ENCODE measurements at regions of chr3 and their contacts with region 1.

Region 1: DNA sequence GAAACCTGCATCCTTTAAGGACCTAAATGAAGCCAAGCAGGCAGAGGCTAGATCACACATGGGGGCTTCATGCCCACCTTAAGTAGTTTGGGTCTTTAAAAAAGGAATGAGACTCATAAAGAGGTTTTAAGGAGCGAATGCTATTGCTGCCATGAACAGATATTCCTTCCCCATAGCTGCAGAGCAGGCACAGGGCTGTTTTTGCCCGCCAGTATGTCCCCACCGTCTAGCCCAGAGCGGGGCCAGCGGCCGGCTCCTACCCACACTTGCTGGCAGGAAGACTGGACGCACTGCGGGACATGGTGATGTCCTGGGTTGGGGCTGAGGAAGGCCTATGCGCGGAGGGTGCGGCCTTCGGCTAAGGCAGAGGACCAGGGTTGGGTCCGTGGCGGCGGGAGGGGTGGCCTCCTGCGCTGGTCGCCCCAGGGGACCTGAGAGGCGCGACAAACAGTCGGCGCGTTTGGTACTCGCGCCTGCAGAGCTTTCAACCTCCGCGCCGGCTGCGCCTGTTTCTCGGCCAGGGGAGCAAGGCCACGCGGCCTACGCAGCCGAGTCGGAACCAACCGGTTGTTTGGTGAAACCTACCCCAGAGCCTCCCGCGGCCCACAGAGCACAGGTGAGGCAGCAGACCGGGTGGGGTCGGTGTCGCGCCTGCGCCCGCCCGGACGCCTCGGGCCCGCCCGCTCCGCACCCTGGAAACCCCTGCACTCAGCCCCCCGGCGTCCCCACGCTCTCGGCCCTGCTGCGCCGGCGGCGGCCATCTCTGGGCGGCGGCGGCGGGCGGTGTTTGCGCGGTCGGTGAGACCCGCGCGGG is at the start of gene FAIM:
- DNase-seq: peak; percentile 71 to 84 (median 78)
- H3K4me3 ChIP-seq: peak within 1 kb of the TSS; percentile 45 to 48
- H3K4me3 Mint-ChIP-seq: peak within 1 kb of the TSS; percentile 87 to 99 (median 88)
- H3K27ac ChIP-seq: peak within 1 kb of the TSS; percentile 67
- H3K27ac Mint-ChIP-seq: peak within 1 kb of the TSS; percentile 93 to 100 (median 96)
- H3K4me1 ChIP-seq: peaks cover 13% of the 10 kb centered on the region
- H3K4me1 Mint-ChIP-seq: peaks cover 9 to 23% (median 16%) of the 10 kb centered on the region in 4 donors
- H3K27me3 ChIP-seq: no peaks in the 10 kb centered on the region
- H3K27me3 Mint-ChIP-seq: peaks cover 0 to 5% of the 10 kb centered on the region in 2 donors
- total RNA-seq, gene FAIM: 4.6 to 5.0 TPM

Region 2: GRCh38 chr3:138547342-138547975 is 61.1 kb before region 1 on chr3:
- CTCF ChIA-PET with region 1: no interaction called
- POLR2A ChIA-PET with region 1: no interaction called
- intact Hi-C with region 1: no loop called
- DNase-seq: no peak
- H3K4me3 ChIP-seq: no peak overlapping the region
- H3K4me3 Mint-ChIP-seq: no peak overlapping the region
- H3K27ac ChIP-seq: no peak overlapping the region
- H3K27ac Mint-ChIP-seq: no peak overlapping the region
- H3K4me1 ChIP-seq: no peaks in the 10 kb centered on the region
- H3K4me1 Mint-ChIP-seq: no peaks in the 10 kb centered on the region
- H3K27me3 ChIP-seq: no peaks in the 10 kb centered on the region
- H3K27me3 Mint-ChIP-seq: no peaks in the 10 kb centered on the region

Region 3: DNA sequence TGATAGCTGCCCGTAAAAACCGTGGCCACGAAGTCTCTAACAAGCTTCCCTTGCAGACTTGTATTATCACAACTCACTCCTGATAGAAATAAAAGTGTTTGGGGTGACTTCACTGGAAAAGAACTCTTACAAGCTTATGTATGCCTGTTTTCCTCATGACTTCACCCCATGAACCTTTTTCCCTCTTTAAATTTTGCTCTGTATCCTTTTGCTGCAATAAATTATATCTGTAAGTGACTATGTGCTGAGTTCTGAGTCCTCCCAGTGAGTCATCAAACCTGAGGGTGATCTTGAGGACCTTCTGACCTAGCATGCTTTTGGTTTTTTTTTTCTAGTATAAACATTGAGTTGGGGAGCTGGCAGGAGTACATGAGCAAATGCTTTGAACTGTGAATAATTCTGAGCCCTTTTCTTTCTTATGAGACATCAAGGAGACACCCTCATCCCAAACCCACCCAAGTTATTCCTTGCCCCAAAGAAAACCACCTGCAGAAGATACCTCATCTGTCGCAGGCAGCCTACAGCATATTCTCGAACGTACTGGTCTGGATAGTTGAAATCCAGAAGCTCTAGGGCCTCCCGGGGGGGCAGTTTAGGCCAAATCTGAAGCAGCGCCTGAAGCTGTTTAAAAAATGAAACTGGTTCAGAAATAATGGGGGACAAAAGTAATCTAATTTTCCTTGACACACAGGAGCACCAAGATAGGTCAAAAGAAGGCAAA is 85.9 kb after region 1 on chr3:
- CTCF ChIA-PET with region 1: no interaction called
- POLR2A ChIA-PET with region 1: no interaction called
- intact Hi-C with region 1: loop called (anchors 5 kb)
- DNase-seq: no peak
- H3K4me3 ChIP-seq: no peak overlapping the region
- H3K4me3 Mint-ChIP-seq: no peak overlapping the region
- H3K27ac ChIP-seq: no peak overlapping the region
- H3K27ac Mint-ChIP-seq: peak overlapping the region in 1 of 7 donors; percentile 41
- H3K4me1 ChIP-seq: no peaks in the 10 kb centered on the region
- H3K4me1 Mint-ChIP-seq: no peaks in the 10 kb centered on the region
- H3K27me3 ChIP-seq: no peaks in the 10 kb centered on the region
- H3K27me3 Mint-ChIP-seq: no peaks in the 10 kb centered on the region

Measured in CD4-positive, alpha-beta memory T cell (primary cell).